Natural killer cell (primary cell): ENCODE measurements at regions of chr2 and their contacts with region 1.

Region 1: DNA sequence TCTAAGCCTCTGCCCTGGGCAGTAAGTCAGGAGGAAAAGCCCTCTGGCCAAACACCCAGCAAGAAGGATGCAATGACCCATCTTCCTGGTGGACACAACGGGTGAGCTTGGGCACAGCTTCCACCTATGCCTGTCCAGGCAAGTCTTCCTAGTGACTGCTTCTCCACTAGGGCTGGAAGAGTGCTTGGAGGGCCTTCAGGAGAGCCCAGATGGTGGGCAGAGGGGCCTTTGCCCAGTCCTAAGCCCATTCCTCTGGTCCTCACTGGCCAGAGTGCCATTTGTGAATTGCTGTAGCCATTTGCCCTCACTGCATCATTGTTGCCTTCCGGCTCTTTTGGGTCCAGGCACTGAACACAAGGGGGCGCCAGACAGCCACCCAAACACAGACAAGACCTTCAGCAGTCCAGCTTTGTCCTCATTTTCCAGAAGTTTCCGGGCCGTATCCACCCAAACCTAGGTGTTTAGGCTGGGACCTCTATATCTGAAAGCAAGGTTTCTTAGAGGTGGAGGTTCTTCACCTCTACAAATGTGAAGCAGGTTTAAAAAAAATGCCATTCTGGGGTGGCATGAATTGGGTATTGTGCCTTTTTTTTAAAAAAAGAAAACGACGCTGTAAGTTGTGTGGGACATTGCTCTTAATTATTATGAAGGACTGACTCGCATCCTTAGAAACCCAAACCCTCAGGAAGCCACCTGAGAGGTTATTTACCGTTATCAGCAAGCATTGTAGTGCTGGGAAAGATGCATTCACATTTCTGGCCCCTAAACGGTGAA is 29.5 kb downstream of the PAX8 start:
- DNase-seq: peak; percentile 69 to 89
- ATAC-seq: peak; percentile 76 to 80 (median 78)
- H3K4me3 ChIP-seq: no peak overlapping the region
- H3K4me3 Mint-ChIP-seq: no peak overlapping the region
- H3K27ac ChIP-seq: no peak overlapping the region
- H3K27ac Mint-ChIP-seq: peak overlapping the region; percentile 84 to 87
- H3K4me1 ChIP-seq: peaks cover 33% of the 10 kb centered on the region
- H3K4me1 Mint-ChIP-seq: peaks cover 42 to 47% of the 10 kb centered on the region in 2 donors
- H3K27me3 ChIP-seq: no peaks in the 10 kb centered on the region
- H3K27me3 Mint-ChIP-seq: no peaks in the 10 kb centered on the region
- CTCF ChIP-seq: peak; percentile 94

Region 2: GRCh38 chr2:113370478-113371091 is 121.4 kb after region 1 on chr2:
- intact Hi-C with region 1: loop called (anchors 1 kb)
- DNase-seq: peak; percentile 28 to 85
- ATAC-seq: peak; percentile 82 to 93 (median 90)
- H3K4me3 ChIP-seq: no peak overlapping the region
- H3K4me3 Mint-ChIP-seq: no peak overlapping the region
- H3K27ac ChIP-seq: no peak overlapping the region
- H3K27ac Mint-ChIP-seq: no peak overlapping the region
- H3K4me1 ChIP-seq: peaks cover 3% of the 10 kb centered on the region
- H3K4me1 Mint-ChIP-seq: peaks cover 6 to 7% of the 10 kb centered on the region in 2 donors
- H3K27me3 ChIP-seq: no peaks in the 10 kb centered on the region
- H3K27me3 Mint-ChIP-seq: peaks cover 2 to 8% of the 10 kb centered on the region in 2 donors
- CTCF ChIP-seq: peak; percentile 46

Region 3: DNA sequence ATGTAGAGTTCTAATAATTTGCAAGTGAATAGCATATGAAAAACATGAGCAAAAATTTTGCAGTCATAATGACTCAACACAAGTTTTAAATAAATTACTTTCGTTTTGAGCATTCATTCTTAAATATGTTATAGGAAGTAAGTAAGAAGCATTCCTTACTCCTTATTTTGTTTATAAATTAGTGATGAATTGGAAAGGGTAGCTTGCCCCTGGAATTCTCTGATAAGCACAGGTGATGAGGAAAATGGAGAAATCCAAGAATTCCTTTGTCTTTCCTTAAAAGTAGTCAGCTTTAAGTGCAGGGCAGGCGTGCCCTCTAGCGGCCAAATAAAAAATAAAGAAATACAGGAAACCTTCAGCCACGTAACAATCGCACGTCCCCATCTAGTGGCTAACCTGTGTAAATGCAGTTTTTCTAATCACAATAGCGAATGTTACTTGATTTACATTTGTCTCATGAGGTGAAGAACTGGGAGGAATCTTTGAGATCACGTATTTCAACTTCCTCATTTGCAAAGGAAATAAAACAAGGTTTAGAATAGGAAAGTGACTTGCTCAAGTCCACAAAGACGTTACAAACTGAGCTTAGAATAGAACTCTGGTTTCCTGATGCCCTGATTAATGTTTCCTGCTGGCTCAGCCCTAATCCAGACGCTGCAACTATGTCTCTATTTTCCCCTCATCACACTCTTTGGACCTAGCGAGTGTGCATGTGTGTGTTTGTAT is 141.1 kb after region 1 on chr2:
- intact Hi-C with region 1: loop called (anchors 5 kb)
- DNase-seq: peak in 1 of 2 donors; percentile 88
- ATAC-seq: peak; percentile 98 to 99 (median 99)
- H3K4me3 ChIP-seq: peak overlapping the region; percentile 29
- H3K4me3 Mint-ChIP-seq: peak overlapping the region; percentile 88
- H3K27ac ChIP-seq: peak overlapping the region; percentile 5
- H3K27ac Mint-ChIP-seq: peak overlapping the region; percentile 73 to 79
- H3K4me1 ChIP-seq: peaks cover 3% of the 10 kb centered on the region
- H3K4me1 Mint-ChIP-seq: peaks cover 10 to 16% of the 10 kb centered on the region in 2 donors
- H3K27me3 ChIP-seq: no peaks in the 10 kb centered on the region
- H3K27me3 Mint-ChIP-seq: peaks cover 12 to 16% of the 10 kb centered on the region in 2 donors
- CTCF ChIP-seq: peak; percentile 95